Prostate gland (tissue), 2 donors: ENCODE measurements at regions of chr4 and their contacts with region 1.

Region 1: DNA sequence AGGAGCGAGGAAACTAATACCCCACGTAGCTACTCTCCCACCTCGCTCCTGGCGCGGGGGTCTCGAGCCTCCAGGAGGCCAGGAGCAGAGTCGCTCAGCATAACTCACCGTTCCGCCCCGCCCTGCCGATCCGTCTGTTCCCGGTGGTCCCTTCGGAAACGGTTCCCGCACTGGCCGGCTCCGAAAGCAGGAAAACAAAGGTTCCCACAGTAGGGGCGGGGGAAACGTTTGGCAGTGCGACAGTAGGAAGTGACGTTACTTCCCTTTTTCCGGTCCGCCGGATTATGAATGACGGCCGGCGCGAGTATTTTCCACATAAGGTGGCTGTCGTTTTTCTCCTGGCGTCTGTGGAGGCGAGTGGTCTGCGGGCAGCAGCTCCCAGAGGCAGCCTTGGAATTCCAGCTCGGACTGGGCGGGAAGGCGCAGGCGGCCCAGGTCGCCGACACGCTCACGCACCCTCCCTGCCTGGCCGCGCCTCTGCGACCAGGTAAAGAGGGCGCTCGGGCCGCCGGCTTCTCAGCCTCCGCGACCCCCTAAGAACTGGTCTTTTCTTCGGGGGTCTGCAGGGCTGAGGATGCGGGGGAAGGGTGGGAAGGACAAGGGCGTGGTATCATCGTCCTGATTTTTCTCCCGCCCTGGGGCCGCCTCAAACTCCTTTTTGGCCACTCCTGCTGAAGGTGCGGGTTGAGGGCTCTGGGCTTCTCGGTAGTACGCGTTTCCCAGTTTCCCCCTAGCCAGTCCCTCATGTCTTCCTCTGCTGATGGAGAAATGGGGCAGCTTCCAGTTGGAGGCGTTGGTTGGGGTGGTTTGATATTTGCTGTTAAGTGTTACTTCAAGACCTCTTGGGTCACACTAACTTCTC is at the starts of genes GSTCD and INTS12:
- DNase-seq: peak; percentile 92
- H3K4me3 ChIP-seq: peak within 1 kb of the TSS; percentile 82 to 85
- H3K27ac ChIP-seq: peak within 1 kb of the TSS; percentile 89 to 92
- H3K4me1 ChIP-seq: no peaks in the 10 kb centered on the region
- H3K27me3 ChIP-seq: no peaks in the 10 kb centered on the region
- CTCF ChIP-seq: peak in 1 of 4 experiments; percentile 24
- POLR2A ChIP-seq: peak; percentile 56
- total RNA-seq, gene GSTCD: 10.0 to 20.8 TPM
- total RNA-seq, gene INTS12: 27.4 to 45.6 TPM

Region 2: DNA sequence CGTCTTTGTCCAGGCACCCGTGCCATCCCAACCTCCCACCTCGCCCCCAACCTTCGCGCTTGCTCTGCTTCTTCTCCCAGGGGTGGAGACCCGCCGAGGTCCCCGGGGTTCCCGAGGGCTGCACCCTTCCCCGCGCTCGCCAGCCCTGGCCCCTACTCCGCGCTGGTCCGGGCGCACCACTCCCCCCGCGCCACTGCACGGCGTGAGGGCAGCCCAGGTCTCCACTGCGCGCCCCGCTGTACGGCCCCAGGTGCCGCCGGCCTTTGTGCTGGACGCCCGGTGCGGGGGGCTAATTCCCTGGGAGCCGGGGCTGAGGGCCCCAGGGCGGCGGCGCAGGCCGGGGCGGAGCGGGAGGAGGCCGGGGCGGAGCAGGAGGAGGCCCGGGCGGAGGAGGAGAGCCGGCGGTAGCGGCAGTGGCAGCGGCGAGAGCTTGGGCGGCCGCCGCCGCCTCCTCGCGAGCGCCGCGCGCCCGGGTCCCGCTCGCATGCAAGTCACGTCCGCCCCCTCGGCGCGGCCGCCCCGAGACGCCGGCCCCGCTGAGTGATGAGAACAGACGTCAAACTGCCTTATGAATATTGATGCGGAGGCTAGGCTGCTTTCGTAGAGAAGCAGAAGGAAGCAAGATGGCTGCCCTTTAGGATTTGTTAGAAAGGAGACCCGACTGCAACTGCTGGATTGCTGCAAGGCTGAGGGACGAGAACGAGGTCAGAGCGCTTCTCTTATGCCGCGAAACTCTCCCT is 562.3 kb before region 1 on chr4 and contains the start of gene TET2:
- intact Hi-C with region 1: loop called (anchors 10 kb)
- DNase-seq: peak; percentile 79
- H3K4me3 ChIP-seq: peak within 1 kb of the TSS; percentile 76 to 82
- H3K27ac ChIP-seq: peak within 1 kb of the TSS; percentile 85 to 88
- H3K4me1 ChIP-seq: no peaks in the 10 kb centered on the region
- H3K27me3 ChIP-seq: no peaks in the 10 kb centered on the region
- CTCF ChIP-seq: no peak
- POLR2A ChIP-seq: peak; percentile 88
- total RNA-seq, gene TET2: 19.8 to 20.6 TPM

Region 3: DNA sequence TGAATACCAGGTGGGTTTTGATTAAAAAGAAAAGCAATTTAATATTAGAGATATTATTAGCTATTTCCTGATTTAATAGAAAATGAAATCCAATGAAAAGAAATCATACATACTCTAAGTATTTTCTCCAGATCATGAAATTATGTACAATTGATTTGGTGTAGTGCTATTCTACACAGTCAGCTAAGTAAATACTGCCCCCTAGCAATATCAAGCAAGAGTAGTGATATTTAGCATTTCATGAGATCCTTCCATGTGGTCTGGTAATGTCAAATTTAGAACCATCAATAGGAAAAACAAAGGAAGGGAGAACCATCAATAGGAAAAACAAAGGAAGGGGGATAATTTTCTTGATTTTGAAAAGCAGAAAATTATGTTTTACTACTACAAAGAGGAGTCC is 492.6 kb after region 1 on chr4:
- intact Hi-C with region 1: loop called (anchors 10 kb)
- DNase-seq: no peak
- H3K4me3 ChIP-seq: no peak overlapping the region
- H3K27ac ChIP-seq: no peak overlapping the region
- H3K4me1 ChIP-seq: no peaks in the 10 kb centered on the region
- H3K27me3 ChIP-seq: no peaks in the 10 kb centered on the region
- CTCF ChIP-seq: peak in 3 of 4 experiments; percentile 12 to 27 (median 21)
- POLR2A ChIP-seq: no peak